Activated CD4-positive, alpha-beta T cell treated with anti-CD3 and anti-CD28 coated beads for 36 hours (primary cell): ENCODE measurements at regions of chr2 and their contacts with region 1.

Region 1: GRCh38 chr2:157628477-157629415 is at the start of gene ACVR1C:
- DNase-seq: peak; percentile 80
- ATAC-seq: peak; percentile 82
- H3K4me3 Mint-ChIP-seq: peak within 1 kb of the TSS; percentile 76
- H3K27ac Mint-ChIP-seq: peak within 1 kb of the TSS; percentile 23
- H3K4me1 Mint-ChIP-seq: peaks cover 34% of the 10 kb centered on the region
- H3K27me3 Mint-ChIP-seq: peaks cover 5% of the 10 kb centered on the region
- total RNA-seq, gene ACVR1C: 1.6 to 1.7 TPM

Region 2: GRCh38 chr2:157355618-157356017 is 273.1 kb before region 1 on chr2:
- CTCF ChIA-PET with region 1: no interaction called
- POLR2A ChIA-PET with region 1: no interaction called
- intact Hi-C with region 1: no loop called
- DNase-seq: no peak
- ATAC-seq: no peak
- H3K4me3 Mint-ChIP-seq: no peak overlapping the region
- H3K27ac Mint-ChIP-seq: no peak overlapping the region
- H3K4me1 Mint-ChIP-seq: peaks cover 40% of the 10 kb centered on the region
- H3K27me3 Mint-ChIP-seq: no peaks in the 10 kb centered on the region

Region 3: GRCh38 chr2:157596992-157597681 is 31.6 kb before region 1 on chr2:
- CTCF ChIA-PET with region 1: interaction called, 32 read pairs
- POLR2A ChIA-PET with region 1: interaction called, 4 read pairs
- intact Hi-C with region 1: no loop called
- DNase-seq: peak; percentile 81
- ATAC-seq: peak; percentile 88
- H3K4me3 Mint-ChIP-seq: peak overlapping the region; percentile 59
- H3K27ac Mint-ChIP-seq: no peak overlapping the region
- H3K4me1 Mint-ChIP-seq: peaks cover 8% of the 10 kb centered on the region
- H3K27me3 Mint-ChIP-seq: peaks cover 5% of the 10 kb centered on the region

Region 4: GRCh38 chr2:157603198-157603597 is 25.5 kb before region 1 on chr2:
- CTCF ChIA-PET with region 1: interaction called, 32 read pairs
- POLR2A ChIA-PET with region 1: interaction called, 3 read pairs
- intact Hi-C with region 1: no loop called
- DNase-seq: no peak
- ATAC-seq: no peak
- H3K4me3 Mint-ChIP-seq: no peak overlapping the region
- H3K27ac Mint-ChIP-seq: no peak overlapping the region
- H3K4me1 Mint-ChIP-seq: no peaks in the 10 kb centered on the region
- H3K27me3 Mint-ChIP-seq: peaks cover 2% of the 10 kb centered on the region

Region 5: DNA sequence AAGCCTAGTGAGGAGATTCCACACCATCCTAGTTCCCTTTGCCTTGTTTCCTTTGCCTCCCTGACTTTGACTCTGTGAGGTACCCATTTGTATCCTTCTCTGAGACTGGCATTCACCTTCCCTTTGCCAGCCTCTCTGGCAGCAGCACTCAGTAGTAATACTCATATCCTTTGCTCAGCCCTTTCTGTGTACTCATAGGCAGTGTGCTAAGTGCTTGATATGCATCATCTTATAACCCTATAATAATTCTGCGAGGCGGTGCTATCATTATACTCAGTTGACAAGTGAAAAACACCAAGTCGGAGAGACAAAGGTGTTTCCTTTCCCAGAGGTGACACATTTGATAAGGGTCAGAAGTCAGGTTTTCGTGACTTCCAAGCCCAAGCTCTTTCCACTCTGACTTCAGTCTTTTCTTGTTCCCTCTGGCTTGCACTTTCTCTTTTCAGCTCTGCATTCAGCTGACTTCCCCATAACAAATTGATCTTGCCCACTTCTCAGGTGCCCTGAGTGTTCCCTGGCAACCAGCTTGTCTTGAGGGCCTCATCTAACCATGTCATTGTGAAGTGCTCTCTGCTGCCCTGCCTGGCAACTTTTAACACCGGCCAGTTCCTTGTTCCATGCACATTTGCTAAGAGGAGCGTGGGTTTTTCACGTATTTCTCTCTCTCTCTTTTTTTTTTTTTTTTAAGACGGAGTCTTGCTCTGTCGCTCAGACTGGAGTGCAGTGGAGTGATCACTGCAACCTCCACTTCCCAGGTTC is 378.4 kb after region 1 on chr2:
- CTCF ChIA-PET with region 1: interaction called, 5 read pairs
- POLR2A ChIA-PET with region 1: no interaction called
- intact Hi-C with region 1: loop called (anchors 1 to 2 kb)
- DNase-seq: peak; percentile 44
- ATAC-seq: peak; percentile 82
- H3K4me3 Mint-ChIP-seq: no peak overlapping the region
- H3K27ac Mint-ChIP-seq: no peak overlapping the region
- H3K4me1 Mint-ChIP-seq: peaks cover 18% of the 10 kb centered on the region
- H3K27me3 Mint-ChIP-seq: peaks cover 6% of the 10 kb centered on the region